A549 (cell line): ENCODE measurements at regions of chr14 and their contacts with region 1.

Region 1: GRCh38 chr14:24241829-24242443 is 487 bp downstream of the TINF2 start:
- DNase-seq: peak in 1 of 2 experiments; percentile 97
- ATAC-seq: peak; percentile 89 to 93
- H3K4me3 ChIP-seq: peak overlapping the region; percentile 64
- H3K27ac ChIP-seq: peak overlapping the region; percentile 89 to 99
- H3K4me1 ChIP-seq: peaks cover 11% of the 10 kb centered on the region
- CTCF ChIP-seq: no peak
- EP300 ChIP-seq: no peak
- POLR2A ChIP-seq: no peak
- RAD21 ChIP-seq: no peak

Region 2: GRCh38 chr14:24215495-24216344 is 26.2 kb before region 1 on chr14 and contains the start of gene MDP1:
- CTCF ChIA-PET with region 1: interaction called, 14 read pairs
- POLR2A ChIA-PET with region 1: interaction called, 28 read pairs
- DNase-seq: peak; percentile 90 to 95
- ATAC-seq: peak; percentile 77 to 84
- H3K4me3 ChIP-seq: peak within 1 kb of the TSS; percentile 63
- H3K27ac ChIP-seq: peak within 1 kb of the TSS; percentile 80 to 92
- H3K4me1 ChIP-seq: peaks cover 24% of the 10 kb centered on the region
- CTCF ChIP-seq: peak; percentile 56
- EP300 ChIP-seq: no peak
- POLR2A ChIP-seq: peak; percentile 86
- RAD21 ChIP-seq: peak; percentile 46 to 56; a peak in 4 of 5 replicates
- polyA plus RNA-seq, gene MDP1: 31.8 and 38.6 TPM in 2 replicates

Region 3: GRCh38 chr14:24259252-24259995 is 17.5 kb after region 1 on chr14:
- CTCF ChIA-PET with region 1: interaction called, 76 read pairs
- POLR2A ChIA-PET with region 1: interaction called, 4 read pairs
- DNase-seq: no peak
- ATAC-seq: peak in 1 of 2 experiments; percentile 9; a peak in 1 of 6 replicates
- H3K4me3 ChIP-seq: no peak overlapping the region
- H3K27ac ChIP-seq: peak overlapping the region in 1 of 2 experiments; percentile 49; a peak in 2 of 6 replicates
- H3K4me1 ChIP-seq: peaks cover 8% of the 10 kb centered on the region
- CTCF ChIP-seq: no peak
- EP300 ChIP-seq: no peak
- POLR2A ChIP-seq: no peak
- RAD21 ChIP-seq: no peak

Region 4: GRCh38 chr14:24271134-24271833 is 29.3 kb after region 1 on chr14 and contains the start of gene RABGGTA:
- CTCF ChIA-PET with region 1: interaction called, 63 read pairs
- POLR2A ChIA-PET with region 1: interaction called, 53 read pairs
- DNase-seq: peak; percentile 91 to 93
- ATAC-seq: peak; percentile 91 to 98
- H3K4me3 ChIP-seq: peak within 1 kb of the TSS; percentile 59
- H3K27ac ChIP-seq: peak within 1 kb of the TSS; percentile 89 to 97
- H3K4me1 ChIP-seq: 0 out of 3 replicates have a peak, but pooled peaks cover 5% of the 10 kb centered on the region
- CTCF ChIP-seq: peak; percentile 62
- EP300 ChIP-seq: no peak
- POLR2A ChIP-seq: peak; percentile 42
- RAD21 ChIP-seq: no peak
- polyA plus RNA-seq, gene RABGGTA: 18.6 and 22.4 TPM in 2 replicates

Region 5: GRCh38 chr14:24299255-24300195 is 57.6 kb after region 1 on chr14 and contains the starts of genes DHRS1 and NOP9:
- CTCF ChIA-PET with region 1: interaction called, 601 read pairs
- POLR2A ChIA-PET with region 1: interaction called, 53 read pairs
- DNase-seq: peak; percentile 87 to 91
- ATAC-seq: peak; percentile 62 to 82
- H3K4me3 ChIP-seq: peak within 1 kb of the TSS; percentile 81
- H3K27ac ChIP-seq: peak within 1 kb of the TSS; percentile 82 to 92
- H3K4me1 ChIP-seq: peaks cover 15% of the 10 kb centered on the region; the same call in 2 of the 3 replicates
- CTCF ChIP-seq: no peak
- EP300 ChIP-seq: no peak
- POLR2A ChIP-seq: peak; percentile 61
- RAD21 ChIP-seq: no peak
- polyA plus RNA-seq, gene DHRS1: 17.4 and 17.9 TPM in 2 replicates
- polyA plus RNA-seq, gene NOP9: 16.5 and 23.6 TPM in 2 replicates

Region 6: DNA sequence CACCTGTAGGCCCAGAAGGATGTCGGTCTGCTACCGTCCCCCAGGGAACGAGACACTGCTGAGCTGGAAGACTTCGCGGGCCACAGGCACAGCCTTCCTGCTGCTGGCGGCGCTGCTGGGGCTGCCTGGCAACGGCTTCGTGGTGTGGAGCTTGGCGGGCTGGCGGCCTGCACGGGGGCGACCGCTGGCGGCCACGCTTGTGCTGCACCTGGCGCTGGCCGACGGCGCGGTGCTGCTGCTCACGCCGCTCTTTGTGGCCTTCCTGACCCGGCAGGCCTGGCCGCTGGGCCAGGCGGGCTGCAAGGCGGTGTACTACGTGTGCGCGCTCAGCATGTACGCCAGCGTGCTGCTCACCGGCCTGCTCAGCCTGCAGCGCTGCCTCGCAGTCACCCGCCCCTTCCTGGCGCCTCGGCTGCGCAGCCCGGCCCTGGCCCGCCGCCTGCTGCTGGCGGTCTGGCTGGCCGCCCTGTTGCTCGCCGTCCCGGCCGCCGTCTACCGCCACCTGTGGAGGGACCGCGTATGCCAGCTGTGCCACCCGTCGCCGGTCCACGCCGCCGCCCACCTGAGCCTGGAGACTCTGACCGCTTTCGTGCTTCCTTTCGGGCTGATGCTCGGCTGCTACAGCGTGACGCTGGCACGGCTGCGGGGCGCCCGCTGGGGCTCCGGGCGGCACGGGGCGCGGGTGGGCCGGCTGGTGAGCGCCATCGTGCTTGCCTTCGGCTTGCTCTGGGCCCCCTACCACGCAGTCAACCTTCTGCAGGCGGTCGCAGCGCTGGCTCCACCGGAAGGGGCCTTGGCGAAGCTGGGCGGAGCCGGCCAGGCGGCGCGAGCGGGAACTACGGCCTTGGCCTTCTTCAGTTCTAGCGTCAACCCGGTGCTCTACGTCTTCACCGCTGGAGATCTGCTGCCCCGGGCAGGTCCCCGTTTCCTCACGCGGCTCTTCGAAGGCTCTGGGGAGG is 69.0 kb after region 1 on chr14 and contains the start of gene LTB4R:
- CTCF ChIA-PET with region 1: interaction called, 601 read pairs
- POLR2A ChIA-PET with region 1: interaction called, 23 read pairs
- DNase-seq: no peak
- ATAC-seq: no peak
- H3K4me3 ChIP-seq: no peak within 1 kb of the TSS
- H3K27ac ChIP-seq: no peak within 1 kb of the TSS
- H3K4me1 ChIP-seq: peaks cover 16% of the 10 kb centered on the region
- CTCF ChIP-seq: no peak
- EP300 ChIP-seq: no peak
- POLR2A ChIP-seq: no peak
- RAD21 ChIP-seq: no peak
- polyA plus RNA-seq, gene LTB4R: 10.2 and 13.2 TPM in 2 replicates

Region 7: DNA sequence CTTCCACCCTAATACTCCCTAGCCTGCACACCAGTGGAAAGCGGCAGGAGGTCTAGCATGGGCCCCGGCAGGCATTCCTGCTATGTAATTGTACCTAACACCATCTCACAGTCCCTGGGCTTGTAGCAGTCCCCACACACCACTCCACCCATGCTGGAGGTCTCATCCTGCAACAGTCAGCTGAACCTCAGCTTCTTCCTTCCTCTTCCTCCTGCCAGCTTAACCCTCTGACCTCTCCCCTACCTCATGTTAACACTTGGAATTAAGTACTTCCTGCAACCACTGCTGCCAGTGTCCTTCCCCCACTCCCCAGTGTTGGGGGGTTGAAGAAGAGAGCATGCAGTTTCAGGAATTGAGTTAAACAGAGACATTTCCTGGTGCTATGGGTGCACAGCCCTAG is 85.4 kb after region 1 on chr14:
- CTCF ChIA-PET with region 1: interaction called, 23 read pairs
- POLR2A ChIA-PET with region 1: interaction called, 3 read pairs
- DNase-seq: no peak
- ATAC-seq: no peak
- H3K4me3 ChIP-seq: no peak overlapping the region
- H3K27ac ChIP-seq: no peak overlapping the region
- H3K4me1 ChIP-seq: peaks cover under 1% of the 10 kb centered on the region; the same call in 1 of the 3 replicates
- CTCF ChIP-seq: no peak
- EP300 ChIP-seq: no peak
- POLR2A ChIP-seq: no peak
- RAD21 ChIP-seq: no peak